ENCODE measurements at regions of chr2 and their contacts with region 1.

Region 1: DNA sequence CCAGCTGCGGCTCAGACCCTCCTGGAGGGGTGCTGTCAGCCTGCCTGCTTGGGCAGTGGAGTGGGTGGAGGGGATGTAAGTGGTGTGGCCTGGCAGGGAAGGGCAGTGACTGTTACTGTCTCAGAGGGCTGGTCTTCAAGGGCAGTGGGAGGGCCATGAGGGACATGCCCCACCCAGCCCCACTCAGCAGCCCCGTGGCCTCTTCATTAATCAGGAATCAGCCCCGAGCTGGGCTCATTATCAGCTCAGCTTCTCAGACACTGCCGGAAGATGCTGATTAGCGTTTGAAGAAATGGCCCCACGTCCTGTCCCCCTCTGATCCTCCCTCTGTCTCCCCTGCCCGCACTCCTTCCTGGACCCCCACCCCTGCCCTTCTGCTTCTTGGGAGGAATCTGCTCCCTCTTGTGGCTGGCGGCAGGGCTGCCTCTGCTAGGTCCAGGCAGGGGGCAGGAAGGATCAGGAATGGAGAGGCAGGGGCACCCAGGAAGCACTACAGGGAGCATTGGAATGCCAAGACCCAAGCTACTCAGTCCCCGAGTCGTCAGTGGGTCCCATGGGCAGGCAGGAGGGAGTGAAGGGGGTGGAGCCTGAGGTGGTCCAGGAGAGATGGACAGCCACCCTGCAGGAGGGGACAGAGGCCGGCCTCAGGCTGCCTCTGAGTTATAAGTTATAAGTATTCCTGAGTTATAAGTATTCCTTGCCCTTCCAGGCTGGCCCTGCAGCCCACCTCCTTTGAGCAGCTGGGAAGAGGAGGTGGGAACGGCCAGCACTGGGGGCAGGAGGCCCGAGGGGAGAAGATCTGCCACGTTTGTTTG is 7.0 kb downstream of the ASIC4 start:
- DNase-seq: peak; percentile 80
- ATAC-seq: peak; percentile 68
- H3K4me3 Mint-ChIP-seq: peak overlapping the region; percentile 64
- H3K27ac Mint-ChIP-seq: peak overlapping the region; percentile 58
- H3K4me1 Mint-ChIP-seq: peaks cover 64% of the 10 kb centered on the region
- H3K27me3 Mint-ChIP-seq: peaks cover 32% of the 10 kb centered on the region
- CTCF ChIP-seq: peak; percentile 49; the same call in 1 of the 2 replicates

Region 2: DNA sequence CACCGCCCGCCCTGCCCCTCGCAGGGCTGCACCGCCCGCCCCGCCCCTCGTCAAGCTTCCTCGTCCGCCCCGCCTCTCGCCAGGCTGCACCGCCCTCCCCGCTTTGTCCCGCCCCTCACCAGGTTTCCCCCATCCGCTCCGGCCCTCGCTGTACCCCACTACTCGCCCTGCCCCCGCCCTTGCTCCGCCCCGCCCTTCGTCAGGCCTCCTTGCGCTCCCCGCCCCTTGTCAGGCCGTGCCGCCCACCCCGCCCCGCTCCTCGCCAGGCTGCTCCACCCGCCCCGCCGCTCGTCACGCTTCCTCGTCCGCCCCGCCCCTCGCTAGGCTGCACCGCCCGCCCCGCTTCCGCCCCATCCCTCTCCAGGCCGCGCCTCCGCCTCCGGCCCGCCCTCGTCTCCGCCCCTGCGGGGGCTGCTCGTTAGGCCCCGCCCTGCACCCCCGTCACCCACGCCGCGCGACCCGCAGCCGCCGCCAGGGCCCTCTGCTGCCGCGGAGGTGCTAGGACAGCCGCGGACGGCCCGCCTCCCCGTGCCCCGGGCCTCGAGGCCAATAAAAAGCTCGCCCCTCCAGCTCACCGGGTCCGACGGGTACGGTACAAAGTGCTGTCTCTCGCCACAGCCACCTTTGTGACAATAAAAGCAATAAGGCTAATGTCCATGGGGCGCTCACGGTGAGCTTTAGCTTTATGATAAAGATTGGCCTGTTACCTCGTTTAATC is 133.0 kb before region 1 on chr2:
- CTCF ChIA-PET with region 1: interaction called, 12 read pairs
- POLR2A ChIA-PET with region 1: interaction called, 3 read pairs
- DNase-seq: peak; percentile 97
- ATAC-seq: peak; percentile 76
- H3K4me3 Mint-ChIP-seq: peak overlapping the region; percentile 76
- H3K27ac Mint-ChIP-seq: no peak overlapping the region; the same call in 1 of the 2 replicates
- H3K4me1 Mint-ChIP-seq: peaks cover 7% of the 10 kb centered on the region
- H3K27me3 Mint-ChIP-seq: 0 out of 2 replicates have a peak, but pooled peaks cover 3% of the 10 kb centered on the region
- CTCF ChIP-seq: no peak

Region 3: GRCh38 chr2:219441451-219442255 is 79.6 kb before region 1 on chr2:
- CTCF ChIA-PET with region 1: interaction called, 10 read pairs
- POLR2A ChIA-PET with region 1: no interaction called
- DNase-seq: peak; percentile 62
- ATAC-seq: peak; percentile 60
- H3K4me3 Mint-ChIP-seq: peak overlapping the region; percentile 82
- H3K27ac Mint-ChIP-seq: no peak overlapping the region
- H3K4me1 Mint-ChIP-seq: peaks cover 27% of the 10 kb centered on the region
- H3K27me3 Mint-ChIP-seq: peaks cover 22% of the 10 kb centered on the region
- CTCF ChIP-seq: no peak

Region 4: DNA sequence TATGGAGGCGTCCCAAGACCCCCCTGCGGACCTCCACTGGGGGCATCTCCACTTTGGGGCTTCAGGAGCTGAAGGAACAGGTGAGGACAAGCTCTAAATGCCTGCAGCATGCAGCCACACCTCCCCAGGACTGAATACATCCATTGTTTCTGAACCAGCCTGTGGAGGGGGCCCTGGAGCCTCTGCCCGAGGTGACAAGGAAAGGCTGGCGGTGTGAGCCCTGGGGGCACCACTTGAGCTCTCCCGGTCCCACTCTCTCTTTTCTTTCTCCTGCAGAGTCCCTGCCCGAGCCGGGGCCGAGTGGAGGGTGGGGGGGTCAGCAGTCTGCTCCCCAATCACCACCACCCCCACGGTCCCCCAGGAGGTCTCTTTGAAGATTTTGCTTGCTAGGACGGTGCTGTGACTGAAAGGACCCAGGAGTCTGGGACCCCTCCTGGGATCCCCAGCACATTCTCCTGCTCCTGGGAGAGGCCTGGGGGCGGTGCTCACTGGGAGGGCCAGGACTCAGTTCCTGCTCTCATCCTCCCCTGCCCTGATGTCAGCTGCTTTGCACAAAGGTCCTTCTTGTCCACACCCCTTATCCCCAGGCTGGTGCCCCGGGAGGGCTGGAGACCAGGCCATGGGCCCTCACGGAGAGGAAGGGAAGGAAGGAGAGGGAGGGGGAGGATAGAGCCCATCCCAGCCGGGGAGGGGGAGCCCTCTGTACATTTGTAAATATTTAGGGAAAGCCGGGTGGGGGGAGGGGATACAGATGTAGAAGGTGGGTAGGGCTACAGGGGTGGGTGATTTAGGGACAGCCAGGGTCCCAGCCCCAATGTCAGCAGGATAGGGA is 16.6 kb after region 1 on chr2:
- CTCF ChIA-PET with region 1: interaction called, 133 read pairs
- POLR2A ChIA-PET with region 1: no interaction called
- DNase-seq: peak; percentile 51
- ATAC-seq: peak; percentile 38
- H3K4me3 Mint-ChIP-seq: no peak overlapping the region
- H3K27ac Mint-ChIP-seq: no peak overlapping the region
- H3K4me1 Mint-ChIP-seq: peaks cover 27% of the 10 kb centered on the region
- H3K27me3 Mint-ChIP-seq: no peaks in the 10 kb centered on the region; the same call in none of the 2 replicates
- CTCF ChIP-seq: no peak